Left cardiac atrium (tissue), 4 donors: ENCODE measurements at regions of chr2 and their contacts with region 1.

Region 1: DNA sequence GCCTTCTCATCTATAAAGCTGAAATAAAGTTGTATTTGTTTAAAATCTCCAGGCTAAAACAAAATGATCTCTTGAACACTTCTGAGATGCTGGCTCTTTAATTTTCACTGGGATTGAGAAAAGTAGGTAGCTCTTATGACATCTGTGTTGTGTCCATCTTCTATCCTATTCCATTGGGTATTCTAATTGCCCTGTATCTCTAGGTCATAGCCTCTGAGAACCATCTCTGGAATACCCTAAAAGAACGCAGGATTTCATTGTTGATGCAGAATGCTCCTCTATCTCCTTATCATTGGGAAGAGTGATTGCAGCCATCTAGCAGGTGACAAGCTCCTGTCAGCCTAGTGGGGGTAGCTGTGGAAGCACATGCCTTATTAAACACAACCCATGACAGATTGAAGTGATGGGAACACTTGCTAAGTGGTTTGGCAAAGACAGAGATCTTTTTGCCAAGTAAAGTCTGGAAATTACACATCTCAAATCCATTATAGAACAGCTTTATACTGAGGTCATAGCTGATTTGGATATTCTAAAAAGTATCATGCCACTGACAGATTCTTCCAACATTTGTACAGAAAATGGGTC is 178.2 kb downstream of the TDRD15 start:
- DNase-seq: no peak
- ATAC-seq: peak; percentile 88 to 90

Region 2: GRCh38 chr2:21194858-21195271 is 107.1 kb before region 1 on chr2:
- intact Hi-C with region 1: loop called in 1 of 2 experiments (anchors 5 kb)
- DNase-seq: no peak
- ATAC-seq: peak in 1 of 2 donors; percentile 60

Region 3: GRCh38 chr2:22062679-22063078 is 760.7 kb after region 1 on chr2:
- intact Hi-C with region 1: no loop called
- DNase-seq: no peak
- ATAC-seq: no peak

Region 4: GRCh38 chr2:22518641-22519040 is 1216.7 kb after region 1 on chr2:
- intact Hi-C with region 1: no loop called
- DNase-seq: no peak
- ATAC-seq: no peak